HEK293 (cell line): ENCODE measurements at regions of chr4 and their contacts with region 1.

Region 1: GRCh38 chr4:147617173-147617840 is at the start of gene TMEM184C:
- H3K4me3 ChIP-seq: peak within 1 kb of the TSS; percentile 65
- H3K27ac ChIP-seq: peak within 1 kb of the TSS; percentile 67
- H3K4me1 ChIP-seq: peaks cover 3% of the 10 kb centered on the region; the same call in 1 of the 2 replicates
- CTCF ChIP-seq: no peak

Region 2: DNA sequence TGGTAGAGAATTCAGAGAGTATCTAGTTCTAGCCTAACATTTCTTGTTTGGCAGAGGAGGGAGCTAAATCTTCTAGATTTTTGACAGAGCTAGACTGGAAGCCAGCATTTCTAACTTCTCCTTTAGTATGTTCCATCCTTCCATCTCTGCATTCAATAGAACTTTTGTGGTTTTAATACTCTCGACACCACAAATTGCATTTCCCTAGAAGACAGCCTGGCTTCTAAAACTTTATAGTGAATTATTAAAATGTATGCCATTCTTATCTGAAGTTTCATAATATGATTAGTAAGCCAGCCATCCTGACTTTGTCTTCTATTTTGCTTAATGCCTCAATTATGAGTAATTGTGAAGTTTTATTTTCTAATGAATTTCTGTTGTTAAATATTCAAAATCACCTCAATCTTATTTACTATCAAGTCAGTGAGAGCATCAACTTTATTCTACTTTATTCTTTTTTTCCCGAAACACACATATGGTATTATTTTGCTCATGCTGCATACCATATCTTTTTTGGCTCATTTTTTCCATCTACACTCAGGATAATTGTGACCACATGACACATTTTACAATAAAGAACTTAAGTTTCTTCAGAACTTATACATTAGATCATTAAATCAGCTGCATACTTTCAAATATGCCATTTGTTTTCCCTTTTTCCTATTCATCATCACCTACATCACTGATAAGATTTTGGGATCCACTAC is 106.2 kb before region 1 on chr4:
- CTCF ChIA-PET with region 1: no interaction called
- POLR2A ChIA-PET with region 1: no interaction called
- H3K4me3 ChIP-seq: no peak overlapping the region
- H3K27ac ChIP-seq: no peak overlapping the region
- H3K4me1 ChIP-seq: no peaks in the 10 kb centered on the region
- CTCF ChIP-seq: no peak

Region 3: DNA sequence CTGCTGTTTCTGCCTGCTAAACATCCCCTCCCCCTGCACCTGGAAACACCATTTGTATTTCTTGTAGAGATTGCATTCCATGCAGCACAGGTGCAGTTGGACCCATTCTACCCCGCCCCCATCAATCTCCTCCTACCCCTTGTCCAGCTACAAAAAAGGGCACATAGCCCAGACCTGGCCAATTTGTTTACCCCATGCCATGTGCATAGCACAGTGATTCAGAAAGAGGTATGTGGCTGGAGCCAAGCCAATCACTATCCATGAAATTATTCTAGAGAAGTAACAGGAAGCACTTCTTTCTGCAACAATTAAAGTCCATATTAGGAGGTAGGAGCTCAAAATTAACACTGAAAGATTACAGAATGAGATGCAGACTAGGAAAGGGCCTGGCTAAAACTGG is 20.3 kb before region 1 on chr4:
- CTCF ChIA-PET with region 1: interaction called, 4 read pairs
- POLR2A ChIA-PET with region 1: interaction called, 11 read pairs
- H3K4me3 ChIP-seq: no peak overlapping the region
- H3K27ac ChIP-seq: no peak overlapping the region
- H3K4me1 ChIP-seq: no peaks in the 10 kb centered on the region
- CTCF ChIP-seq: no peak

Region 4: GRCh38 chr4:147683717-147684700 is 66.7 kb after region 1 on chr4 and contains the start of gene PRMT9:
- CTCF ChIA-PET with region 1: interaction called, 5 read pairs
- POLR2A ChIA-PET with region 1: interaction called, 19 read pairs
- H3K4me3 ChIP-seq: peak within 1 kb of the TSS; percentile 84
- H3K27ac ChIP-seq: peak within 1 kb of the TSS; percentile 76
- H3K4me1 ChIP-seq: no peaks in the 10 kb centered on the region
- CTCF ChIP-seq: no peak